ENCODE measurements at regions of chr5 and their contacts with region 1.

Region 1: DNA sequence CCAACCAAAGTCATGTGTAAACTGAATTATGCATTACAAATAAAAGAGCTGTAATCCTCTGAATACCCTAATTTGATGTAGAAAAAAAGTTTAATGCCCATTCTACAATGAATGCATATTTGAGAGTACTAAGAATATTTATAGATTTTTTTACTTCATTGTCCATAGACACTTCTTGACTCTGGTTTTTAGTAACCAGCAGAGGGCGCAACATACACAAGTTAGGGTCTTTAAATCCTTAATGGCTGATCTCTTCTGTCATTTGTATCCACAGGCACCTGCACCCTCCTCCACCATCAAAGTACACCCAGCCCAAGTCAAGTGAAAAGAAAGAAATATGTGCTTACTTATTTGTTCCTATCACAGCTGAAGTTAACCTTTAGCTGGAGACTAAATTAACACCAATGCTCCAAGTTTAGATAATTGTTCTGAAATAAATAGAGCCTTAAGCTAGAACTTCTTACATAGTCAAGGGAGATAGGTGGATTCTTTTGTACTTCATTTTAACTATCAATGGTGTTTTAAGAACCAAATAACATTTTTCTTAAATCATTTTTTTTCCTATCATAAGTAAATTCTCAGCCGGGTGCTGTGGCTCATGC is 524.2 kb upstream of the DAB2 start:
- DNase-seq: peak; percentile 56 to 66
- H3K4me3 ChIP-seq: no peak overlapping the region
- H3K27ac ChIP-seq: no peak overlapping the region
- H3K4me1 ChIP-seq: no peaks in the 10 kb centered on the region
- H3K27me3 ChIP-seq: no peaks in the 10 kb centered on the region
- CTCF ChIP-seq: peak; percentile 96

Region 2: DNA sequence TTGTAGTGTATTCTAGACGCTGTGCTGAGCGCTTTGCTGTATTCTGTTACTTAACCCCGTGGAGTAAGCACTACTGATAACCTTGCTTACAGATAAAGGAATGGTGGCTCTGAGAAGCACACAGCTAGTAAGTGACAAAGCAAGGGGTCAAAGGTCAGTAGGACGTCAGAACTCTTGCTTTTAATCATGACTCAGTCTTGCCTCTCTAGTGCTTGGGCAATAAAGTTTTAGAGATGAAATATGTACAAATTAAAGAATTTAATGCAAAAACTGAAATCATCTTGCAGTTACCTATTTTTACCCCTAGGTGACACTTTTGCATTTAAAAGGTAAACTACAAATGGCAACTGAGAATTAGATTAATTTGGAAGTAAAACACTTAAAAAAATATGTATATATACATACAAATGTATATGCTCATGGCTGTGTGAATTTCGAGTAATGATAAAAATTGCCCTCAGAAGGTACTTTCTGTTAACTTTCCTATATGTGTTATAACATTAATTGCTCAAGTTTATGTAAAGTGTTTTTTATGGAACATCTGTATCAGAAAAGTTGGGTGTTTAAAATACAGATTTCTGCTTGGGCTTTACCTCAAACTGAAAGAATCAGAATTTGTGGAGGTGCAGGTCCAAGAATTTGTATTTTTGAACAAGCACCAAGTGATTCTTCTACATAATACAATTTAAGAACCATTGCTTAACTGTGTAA is 349.1 kb before region 1 on chr5:
- CTCF ChIA-PET with region 1: no interaction called
- POLR2A ChIA-PET with region 1: no interaction called
- intact Hi-C with region 1: loop called (anchors 5 kb)
- DNase-seq: peak in 1 of 2 experiments; percentile 63
- H3K4me3 ChIP-seq: no peak overlapping the region
- H3K27ac ChIP-seq: no peak overlapping the region
- H3K4me1 ChIP-seq: peaks cover 12% of the 10 kb centered on the region
- H3K27me3 ChIP-seq: no peaks in the 10 kb centered on the region
- CTCF ChIP-seq: peak; percentile 85

Region 3: DNA sequence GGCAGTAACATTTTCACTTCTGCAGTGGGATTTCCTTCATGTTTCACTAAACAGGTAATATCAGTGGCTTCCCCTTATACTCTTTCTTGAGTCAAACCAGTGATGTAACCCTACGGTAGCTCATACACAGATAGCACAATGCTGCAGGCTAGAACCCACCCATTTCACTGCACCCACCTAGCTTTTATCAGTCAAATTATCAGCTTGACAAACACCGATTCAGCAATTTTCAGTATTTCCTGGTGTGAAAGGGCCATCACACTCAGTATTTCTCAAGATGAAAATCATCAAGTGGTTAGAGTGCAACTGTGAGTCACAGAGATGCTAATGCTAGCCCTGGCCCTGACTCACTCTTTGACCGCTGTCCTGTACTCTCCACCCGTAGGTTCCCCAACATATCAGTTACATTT is 488.5 kb after region 1 on chr5:
- CTCF ChIA-PET with region 1: no interaction called
- POLR2A ChIA-PET with region 1: no interaction called
- intact Hi-C with region 1: loop called (anchors 1 kb)
- DNase-seq: peak; percentile 77 to 99
- H3K4me3 ChIP-seq: no peak overlapping the region
- H3K27ac ChIP-seq: peak overlapping the region; percentile 74
- H3K4me1 ChIP-seq: peaks cover 22% of the 10 kb centered on the region
- H3K27me3 ChIP-seq: no peaks in the 10 kb centered on the region
- CTCF ChIP-seq: no peak

Region 4: GRCh38 chr5:40551496-40552491 is 602.8 kb after region 1 on chr5:
- CTCF ChIA-PET with region 1: no interaction called
- POLR2A ChIA-PET with region 1: no interaction called
- intact Hi-C with region 1: loop called (anchors 10 kb)
- DNase-seq: peak; percentile 81 to 98
- H3K4me3 ChIP-seq: peak overlapping the region; percentile 15; the same call in 1 of the 2 replicates
- H3K27ac ChIP-seq: peak overlapping the region; percentile 77
- H3K4me1 ChIP-seq: peaks cover 27% of the 10 kb centered on the region
- H3K27me3 ChIP-seq: no peaks in the 10 kb centered on the region
- CTCF ChIP-seq: no peak

Measured in PC-9 (cell line).